GM13977 (cell line): ENCODE measurements at regions of chr5 and their contacts with region 1.

Region 1: DNA sequence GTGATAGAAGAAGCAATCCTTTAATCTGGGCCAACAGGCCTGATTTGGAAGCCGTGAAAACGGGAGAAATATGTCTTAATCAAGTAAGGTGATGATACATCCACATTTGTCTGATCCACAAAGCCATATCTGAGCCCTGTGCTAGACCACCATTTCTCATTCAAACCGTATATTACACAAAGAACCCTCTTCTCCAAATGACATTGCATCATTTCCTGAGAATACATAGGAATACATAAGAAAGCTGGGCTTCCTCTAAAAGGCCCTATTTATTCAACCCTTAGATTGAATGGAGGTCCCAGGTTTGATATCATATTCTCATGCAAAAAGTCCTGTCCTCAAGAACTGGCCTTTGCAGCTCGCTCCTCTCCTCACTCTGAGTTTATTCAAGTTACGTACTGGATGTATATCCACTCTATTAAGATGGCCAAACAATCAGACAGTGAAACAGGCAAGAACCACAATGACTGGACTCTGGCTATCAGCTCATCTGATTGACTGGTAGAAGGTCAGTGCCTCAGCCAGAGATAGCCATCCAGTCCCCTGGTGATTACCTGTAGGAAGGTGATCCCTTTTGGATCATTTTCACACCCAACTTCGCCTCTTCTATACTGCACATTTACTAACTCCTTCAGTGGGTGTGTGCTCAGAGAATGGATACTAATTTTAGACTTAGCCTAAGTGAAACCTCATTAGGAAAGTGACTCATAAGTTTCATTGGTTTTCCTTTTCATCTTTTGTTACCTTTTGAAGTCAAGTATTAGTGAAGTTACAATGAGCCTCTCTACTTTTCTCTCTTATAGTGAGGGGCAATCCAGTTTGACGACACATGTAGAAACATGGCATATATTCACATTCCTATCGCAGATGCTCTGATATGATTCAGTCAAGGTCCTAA is 167.6 kb upstream of the WWC1 start:
- DNase-seq: peak; percentile 69
- CTCF ChIP-seq: no peak

Region 2: DNA sequence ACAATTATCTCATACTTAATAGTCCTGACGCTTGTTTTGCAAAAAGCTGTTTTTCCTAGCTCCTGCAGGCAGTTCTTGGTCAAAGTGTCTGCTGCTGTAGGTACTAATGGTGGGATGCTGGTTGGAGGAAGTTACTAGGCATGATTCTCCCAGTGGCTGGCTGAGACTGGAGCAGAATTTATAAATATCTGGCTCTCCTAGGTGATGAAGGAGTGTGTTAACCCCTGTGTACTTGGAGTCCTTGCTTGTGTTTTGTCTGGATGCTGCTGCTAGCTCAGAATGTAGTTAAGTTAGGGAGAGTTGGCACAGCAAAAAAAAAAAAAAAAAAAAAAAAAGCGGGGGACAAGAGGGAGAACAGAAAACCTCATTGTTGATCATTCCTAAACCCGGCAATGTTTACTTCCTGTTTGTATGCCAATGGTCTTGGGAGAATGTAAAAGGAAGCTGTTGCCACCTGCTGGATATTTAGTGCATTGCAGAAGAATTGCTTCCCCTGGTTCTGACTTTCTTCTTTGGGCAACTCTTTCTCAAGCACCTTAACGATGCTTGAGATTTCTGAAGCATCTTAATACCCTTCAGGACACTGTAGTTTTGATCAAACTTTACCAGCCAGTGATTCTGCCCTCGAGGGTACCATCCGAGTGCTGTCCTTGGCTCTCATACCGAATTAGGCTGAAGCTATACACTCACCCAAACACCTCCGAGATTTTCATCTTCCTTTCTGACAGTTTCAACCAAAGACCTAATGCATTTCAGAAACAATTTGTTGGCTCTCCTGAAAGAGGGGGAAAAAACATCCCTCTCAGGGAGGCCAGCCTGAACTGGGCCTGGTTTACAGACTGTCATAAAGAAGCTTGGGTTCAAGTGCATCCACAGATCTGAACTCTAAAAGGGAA is 95.9 kb after region 1 on chr5:
- in situ Hi-C with region 1: loop called (anchors 10 kb)
- DNase-seq: peak; percentile 80
- CTCF ChIP-seq: peak; percentile 79